ENCODE measurements at regions of chr16 and their contacts with region 1.

Region 1: GRCh38 chr16:54957403-54958171 is 26.9 kb downstream of the IRX5 start:
- DNase-seq: no peak
- ATAC-seq: no peak
- H3K4me3 ChIP-seq: no peak overlapping the region
- H3K4me3 Mint-ChIP-seq: no peak overlapping the region
- H3K27ac ChIP-seq: no peak overlapping the region
- H3K27ac Mint-ChIP-seq: no peak overlapping the region
- H3K4me1 ChIP-seq: no peaks in the 10 kb centered on the region
- H3K4me1 Mint-ChIP-seq: no peaks in the 10 kb centered on the region
- H3K27me3 ChIP-seq: no peaks in the 10 kb centered on the region
- H3K27me3 Mint-ChIP-seq: peaks cover 21% of the 10 kb centered on the region
- CTCF ChIP-seq: no peak

Region 2: GRCh38 chr16:54829691-54830090 is 127.9 kb before region 1 on chr16:
- CTCF ChIA-PET with region 1: no interaction called
- POLR2A ChIA-PET with region 1: no interaction called
- intact Hi-C with region 1: no loop called
- DNase-seq: no peak
- ATAC-seq: no peak
- H3K4me3 ChIP-seq: no peak overlapping the region
- H3K4me3 Mint-ChIP-seq: no peak overlapping the region
- H3K27ac ChIP-seq: no peak overlapping the region
- H3K27ac Mint-ChIP-seq: no peak overlapping the region
- H3K4me1 ChIP-seq: no peaks in the 10 kb centered on the region
- H3K4me1 Mint-ChIP-seq: no peaks in the 10 kb centered on the region
- H3K27me3 ChIP-seq: no peaks in the 10 kb centered on the region
- H3K27me3 Mint-ChIP-seq: no peaks in the 10 kb centered on the region
- CTCF ChIP-seq: no peak

Region 3: GRCh38 chr16:54921206-54921824 is 36.3 kb before region 1 on chr16:
- CTCF ChIA-PET with region 1: no interaction called
- POLR2A ChIA-PET with region 1: no interaction called
- intact Hi-C with region 1: loop called (anchors 1 kb)
- DNase-seq: no peak
- ATAC-seq: no peak
- H3K4me3 ChIP-seq: no peak overlapping the region
- H3K4me3 Mint-ChIP-seq: no peak overlapping the region
- H3K27ac ChIP-seq: no peak overlapping the region
- H3K27ac Mint-ChIP-seq: no peak overlapping the region
- H3K4me1 ChIP-seq: no peaks in the 10 kb centered on the region
- H3K4me1 Mint-ChIP-seq: no peaks in the 10 kb centered on the region
- H3K27me3 ChIP-seq: peaks cover 0 to 18% (median 8%) of the 10 kb centered on the region in 4 experiments
- H3K27me3 Mint-ChIP-seq: peaks cover 46% of the 10 kb centered on the region
- CTCF ChIP-seq: no peak

Region 4: DNA sequence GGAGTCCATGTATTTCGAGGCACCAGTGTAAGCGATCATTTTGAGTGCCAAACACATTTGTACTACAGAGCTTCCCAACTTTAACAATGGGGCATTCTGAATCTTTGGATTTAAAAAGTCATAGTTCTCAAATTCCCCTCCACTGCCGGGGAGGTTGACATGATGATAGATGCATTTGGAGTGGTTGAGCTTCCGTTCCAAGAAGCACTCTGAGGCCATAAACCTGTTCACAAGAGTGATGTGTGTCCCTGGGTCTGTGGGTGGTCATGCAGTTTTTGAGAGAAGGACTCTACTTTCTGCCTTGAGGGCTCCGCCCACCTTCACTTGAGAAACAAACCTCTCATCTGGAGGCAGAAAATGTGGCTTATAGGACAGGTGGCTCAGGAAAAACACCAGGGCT is 16.8 kb after region 1 on chr16:
- CTCF ChIA-PET with region 1: no interaction called
- POLR2A ChIA-PET with region 1: no interaction called
- intact Hi-C with region 1: no loop called
- DNase-seq: no peak
- ATAC-seq: no peak
- H3K4me3 ChIP-seq: no peak overlapping the region
- H3K4me3 Mint-ChIP-seq: no peak overlapping the region
- H3K27ac ChIP-seq: no peak overlapping the region
- H3K27ac Mint-ChIP-seq: no peak overlapping the region
- H3K4me1 ChIP-seq: no peaks in the 10 kb centered on the region
- H3K4me1 Mint-ChIP-seq: no peaks in the 10 kb centered on the region
- H3K27me3 ChIP-seq: no peaks in the 10 kb centered on the region
- H3K27me3 Mint-ChIP-seq: peaks cover 7% of the 10 kb centered on the region
- CTCF ChIP-seq: no peak

Measured in B cell (primary cell).